ENCODE measurements at regions of chr3 and their contacts with region 1.

Region 1: GRCh38 chr3:194333212-194333980 is 17.7 kb downstream of the CPN2 start:
- DNase-seq: peak; percentile 92
- ATAC-seq: peak; percentile 94

Region 2: GRCh38 chr3:194265483-194265892 is 67.9 kb before region 1 on chr3:
- intact Hi-C with region 1: no loop called
- DNase-seq: peak; percentile 95
- ATAC-seq: peak; percentile 85

Region 3: DNA sequence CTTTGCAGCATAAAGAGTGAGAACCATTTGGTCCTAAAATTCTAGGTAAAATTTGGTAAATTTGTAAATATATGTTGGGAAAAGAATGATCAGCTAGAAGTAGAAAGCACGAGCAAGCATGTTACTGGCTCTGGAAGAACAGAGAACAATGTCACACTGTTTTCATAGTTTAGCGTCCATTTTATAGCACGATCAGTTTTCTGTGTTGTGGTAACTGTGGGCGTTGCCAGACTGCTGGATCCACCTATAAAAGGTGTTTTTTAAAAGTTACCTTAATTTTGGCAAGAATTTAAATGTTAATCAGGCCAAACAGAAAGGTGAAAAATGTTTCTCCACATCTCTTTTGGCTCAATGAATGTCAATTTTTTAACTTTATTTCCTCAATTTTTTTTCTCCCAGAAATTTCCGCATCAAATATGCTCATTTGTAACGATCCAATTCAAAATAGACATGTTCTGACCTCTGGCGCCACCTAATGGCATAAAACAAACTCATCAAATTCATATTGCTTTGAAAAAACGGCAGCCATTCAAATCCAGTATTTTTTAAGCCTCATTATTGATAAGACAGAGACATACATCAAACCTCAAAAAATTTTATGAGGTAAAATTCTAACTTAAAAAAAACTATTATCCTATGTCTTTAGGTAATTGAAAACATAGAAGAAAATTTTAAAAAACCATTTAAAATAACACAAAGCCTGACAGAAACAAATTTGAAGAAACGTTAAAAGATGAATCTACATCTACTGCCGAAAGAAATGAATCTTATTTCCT is 71.2 kb after region 1 on chr3:
- intact Hi-C with region 1: loop called (anchors 5 kb)
- DNase-seq: no peak
- ATAC-seq: no peak

Region 4: GRCh38 chr3:194583604-194584318 is 250.4 kb after region 1 on chr3:
- intact Hi-C with region 1: loop called (anchors 10 kb)
- DNase-seq: peak; percentile 96
- ATAC-seq: peak; percentile 95